Thyroid gland (tissue), 4 donors: ENCODE measurements at regions of chr1 and their contacts with region 1.

Region 1: GRCh38 chr1:155934097-155934935 is at the start of gene KHDC4:
- DNase-seq: peak; percentile 97
- H3K4me3 ChIP-seq: peak within 1 kb of the TSS; percentile 81 to 89 (median 86)
- H3K27ac ChIP-seq: peak within 1 kb of the TSS; percentile 80 to 92 (median 84)
- H3K4me1 ChIP-seq: peaks cover 34 to 45% of the 10 kb centered on the region in 2 donors
- H3K27me3 ChIP-seq: no peaks in the 10 kb centered on the region
- CTCF ChIP-seq: peak in 4 of 6 experiments; percentile 17 to 39 (median 22)
- POLR2A ChIP-seq: peak; percentile 48 to 92
- total RNA-seq, gene KHDC4: 58.5 to 114 (median 60.6) TPM

Region 2: DNA sequence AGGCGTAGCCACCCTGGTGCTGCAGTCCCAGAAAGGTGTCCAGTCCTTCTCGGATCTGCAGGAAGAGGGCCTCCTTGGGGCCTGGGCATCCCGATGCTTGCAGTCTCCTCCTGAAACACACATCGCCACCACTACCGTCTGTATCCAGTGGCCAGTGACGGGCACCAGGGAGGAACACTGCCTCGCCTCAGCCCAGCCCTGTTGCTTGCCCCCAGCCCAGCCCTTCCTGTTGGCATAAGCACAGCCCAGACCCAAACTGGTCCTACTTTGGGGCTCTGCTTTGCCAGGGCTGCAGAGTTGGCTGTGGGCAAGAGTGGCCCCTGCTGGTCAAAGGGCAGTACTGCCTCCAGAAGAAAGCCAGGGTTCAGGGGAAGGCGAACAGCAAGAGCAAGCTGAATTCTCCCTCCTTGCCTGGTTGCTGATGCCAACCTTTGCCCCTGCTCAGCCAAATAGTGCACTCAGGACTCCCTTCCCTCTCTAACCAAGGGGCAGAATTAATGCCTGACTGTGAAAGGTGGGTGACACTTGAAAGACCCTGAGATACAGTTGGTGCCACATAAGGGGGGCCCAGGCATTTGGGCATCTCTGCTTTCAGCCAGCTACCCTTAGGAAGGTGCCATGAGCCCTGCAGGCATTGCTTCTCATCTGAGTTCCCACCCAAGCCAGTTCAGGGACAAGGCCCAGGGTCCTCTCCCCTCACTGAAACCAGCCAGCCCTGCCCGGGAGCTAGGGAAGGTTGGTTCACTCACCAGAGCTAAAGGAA is 55.1 kb after region 1 on chr1:
- intact Hi-C with region 1: loop called (anchors 2 kb)
- DNase-seq: peak; percentile 64 to 66
- H3K4me3 ChIP-seq: no peak overlapping the region
- H3K27ac ChIP-seq: peak overlapping the region in 2 of 3 donors; percentile 15 to 30
- H3K4me1 ChIP-seq: peaks cover 0 to 9% of the 10 kb centered on the region in 2 donors
- H3K27me3 ChIP-seq: no peaks in the 10 kb centered on the region
- CTCF ChIP-seq: peak; percentile 98 to 99 (median 98)
- POLR2A ChIP-seq: no peak

Region 3: DNA sequence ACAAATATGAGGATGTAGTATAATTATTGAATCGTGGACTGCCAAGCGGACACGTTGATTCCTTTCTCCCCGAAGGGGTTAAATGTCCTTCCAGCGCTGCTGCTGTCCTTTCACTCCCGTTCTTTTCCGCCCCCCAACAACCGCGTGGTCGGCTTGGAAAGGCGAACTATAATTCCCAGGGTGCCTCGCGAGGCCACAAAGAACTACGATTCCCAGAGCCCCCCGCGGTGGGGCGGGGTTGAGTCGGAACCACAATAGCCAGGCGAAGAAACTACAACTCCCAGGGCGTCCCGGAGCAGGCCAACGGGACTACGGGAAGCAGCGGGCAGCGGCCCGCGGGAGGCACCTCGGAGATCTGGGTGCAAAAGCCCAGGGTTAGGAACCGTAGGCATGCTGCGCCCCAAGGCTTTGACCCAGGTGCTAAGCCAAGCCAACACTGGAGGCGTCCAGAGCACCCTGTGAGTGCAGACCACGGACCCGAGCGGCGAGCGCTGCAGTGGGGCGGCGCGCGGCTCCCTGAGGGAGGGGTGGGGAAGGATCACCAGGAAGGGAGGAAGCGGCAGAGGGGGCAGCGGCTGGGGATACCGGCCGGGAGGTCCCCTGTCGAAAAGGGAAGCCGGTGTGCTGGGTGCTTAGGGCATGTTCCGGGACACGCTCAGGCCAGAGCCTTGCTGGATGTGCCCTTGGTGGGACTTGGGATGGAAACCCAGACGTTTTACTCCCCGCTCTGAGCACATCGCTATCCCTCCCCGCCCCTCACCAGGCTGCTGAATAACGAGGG is 120.4 kb after region 1 on chr1 and contains the start of gene LAMTOR2:
- intact Hi-C with region 1: loop called (anchors 10 kb)
- DNase-seq: peak; percentile 98 to 99
- H3K4me3 ChIP-seq: peak within 1 kb of the TSS; percentile 60 to 88 (median 84)
- H3K27ac ChIP-seq: peak within 1 kb of the TSS; percentile 76 to 88 (median 83)
- H3K4me1 ChIP-seq: peaks cover 8 to 9% of the 10 kb centered on the region in 2 donors
- H3K27me3 ChIP-seq: no peaks in the 10 kb centered on the region
- CTCF ChIP-seq: peak in 1 of 6 experiments; percentile 7
- POLR2A ChIP-seq: peak in 1 of 2 donors; percentile 79
- total RNA-seq, gene LAMTOR2: 14.7 to 76.8 (median 41.1) TPM